ENCODE measurements at regions of chr11 and their contacts with region 1.

Region 1: GRCh38 chr11:60615497-60615896 is 83.9 kb upstream of the MS4A8 start:
- DNase-seq: no peak
- H3K4me3 Mint-ChIP-seq: no peak overlapping the region
- H3K27ac Mint-ChIP-seq: no peak overlapping the region
- H3K4me1 Mint-ChIP-seq: no peaks in the 10 kb centered on the region
- H3K27me3 Mint-ChIP-seq: peaks cover 11% of the 10 kb centered on the region

Region 2: DNA sequence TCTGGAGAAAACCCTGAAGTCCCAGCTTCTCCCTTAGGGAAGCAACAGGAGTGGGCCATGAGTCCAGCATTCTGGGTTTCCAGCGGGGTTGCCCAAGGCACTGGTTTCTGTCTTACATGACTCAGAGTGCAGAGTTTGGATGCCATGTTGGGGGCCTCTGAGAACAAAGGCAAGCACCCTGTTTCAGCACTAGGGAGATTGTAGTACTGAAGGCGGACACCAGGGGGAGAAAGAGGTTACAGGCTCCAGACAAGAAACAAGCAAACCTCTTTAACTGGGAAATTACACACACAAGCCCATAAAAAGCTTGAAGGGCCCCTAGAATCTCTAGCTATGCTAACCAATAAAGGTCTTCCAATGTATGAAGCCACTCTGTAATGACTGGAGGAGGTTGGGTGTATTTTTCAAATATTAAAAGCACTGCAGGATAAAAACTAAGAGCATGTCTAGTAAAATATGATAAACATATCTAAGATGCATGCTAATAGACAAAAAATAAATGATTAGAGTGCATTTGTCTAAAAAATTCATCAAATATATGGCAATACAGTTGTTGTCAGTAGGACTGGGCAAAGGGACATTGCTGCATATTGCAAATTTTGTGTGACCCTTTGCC is 281.4 kb before region 1 on chr11:
- CTCF ChIA-PET with region 1: interaction called, 3 read pairs
- POLR2A ChIA-PET with region 1: no interaction called
- intact Hi-C with region 1: loop called (anchors 2 kb)
- DNase-seq: peak; percentile 74
- H3K4me3 Mint-ChIP-seq: no peak overlapping the region
- H3K27ac Mint-ChIP-seq: no peak overlapping the region
- H3K4me1 Mint-ChIP-seq: no peaks in the 10 kb centered on the region
- H3K27me3 Mint-ChIP-seq: peaks cover 25% of the 10 kb centered on the region

Region 3: GRCh38 chr11:60345489-60345888 is 270.0 kb before region 1 on chr11:
- CTCF ChIA-PET with region 1: interaction called, 22 read pairs
- POLR2A ChIA-PET with region 1: no interaction called
- intact Hi-C with region 1: loop called (anchors 1 kb)
- DNase-seq: peak; percentile 21
- H3K4me3 Mint-ChIP-seq: no peak overlapping the region
- H3K27ac Mint-ChIP-seq: no peak overlapping the region
- H3K4me1 Mint-ChIP-seq: no peaks in the 10 kb centered on the region
- H3K27me3 Mint-ChIP-seq: peaks cover 26% of the 10 kb centered on the region

Region 4: DNA sequence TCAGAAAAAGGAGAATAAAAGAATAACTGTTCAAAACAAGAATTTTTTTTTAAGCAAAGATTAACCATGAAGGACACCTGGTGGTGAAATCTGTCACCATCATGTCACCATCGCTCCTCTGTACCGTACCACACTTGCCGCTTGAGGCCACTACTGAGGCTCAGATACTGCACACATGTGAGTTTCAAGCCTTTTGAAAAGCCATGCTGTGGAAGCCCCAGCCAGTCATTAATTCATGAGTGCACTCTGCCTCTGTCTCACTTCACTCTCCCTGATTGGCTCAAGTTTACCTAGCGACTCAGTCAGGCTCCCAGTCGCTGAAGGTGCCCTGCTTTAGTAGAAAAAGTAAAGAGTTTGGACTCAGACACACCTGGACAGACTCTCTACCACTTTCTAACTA is 129.5 kb before region 1 on chr11:
- CTCF ChIA-PET with region 1: interaction called, 5 read pairs
- POLR2A ChIA-PET with region 1: no interaction called
- intact Hi-C with region 1: loop called (anchors 5 kb)
- DNase-seq: peak; percentile 44
- H3K4me3 Mint-ChIP-seq: no peak overlapping the region
- H3K27ac Mint-ChIP-seq: no peak overlapping the region
- H3K4me1 Mint-ChIP-seq: peaks cover 8% of the 10 kb centered on the region
- H3K27me3 Mint-ChIP-seq: peaks cover 4% of the 10 kb centered on the region

Region 5: DNA sequence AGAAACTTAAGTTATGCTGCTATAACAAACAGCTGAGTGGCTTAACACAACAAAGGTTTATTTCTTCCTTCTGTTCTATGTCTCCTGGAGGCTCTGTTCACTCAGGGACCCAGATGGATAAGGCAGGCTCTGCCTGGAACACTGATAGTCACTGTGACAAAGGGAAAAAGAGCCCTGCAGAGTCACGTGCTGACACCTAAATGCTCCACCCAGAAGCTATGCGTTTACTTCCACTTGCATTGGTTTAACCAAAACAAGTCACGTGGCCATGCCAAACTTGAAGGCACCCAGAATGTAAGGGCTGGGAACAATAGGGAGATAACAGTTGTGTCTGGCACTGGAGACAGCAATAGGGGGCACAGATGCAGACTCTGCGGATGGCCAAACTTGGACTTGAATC is 137.8 kb after region 1 on chr11:
- CTCF ChIA-PET with region 1: no interaction called
- POLR2A ChIA-PET with region 1: no interaction called
- intact Hi-C with region 1: no loop called
- DNase-seq: no peak
- H3K4me3 Mint-ChIP-seq: no peak overlapping the region
- H3K27ac Mint-ChIP-seq: no peak overlapping the region
- H3K4me1 Mint-ChIP-seq: no peaks in the 10 kb centered on the region
- H3K27me3 Mint-ChIP-seq: peaks cover 18% of the 10 kb centered on the region